ENCODE measurements at regions of chr1 and their contacts with region 1.

Region 1: GRCh38 chr1:239363930-239364329 is 22.4 kb upstream of the CHRM3 start:
- DNase-seq: no peak
- H3K4me3 ChIP-seq: no peak overlapping the region
- H3K4me3 Mint-ChIP-seq: no peak overlapping the region
- H3K27ac Mint-ChIP-seq: peak overlapping the region; percentile 40
- H3K4me1 ChIP-seq: peaks cover 20% of the 10 kb centered on the region
- H3K4me1 Mint-ChIP-seq: peaks cover 31% of the 10 kb centered on the region
- H3K27me3 ChIP-seq: no peaks in the 10 kb centered on the region
- H3K27me3 Mint-ChIP-seq: no peaks in the 10 kb centered on the region
- CTCF ChIP-seq: no peak

Region 2: GRCh38 chr1:239233626-239234025 is 130.3 kb before region 1 on chr1:
- CTCF ChIA-PET with region 1: no interaction called
- POLR2A ChIA-PET with region 1: no interaction called
- intact Hi-C with region 1: loop called (anchors 1 kb)
- DNase-seq: peak in 1 of 2 experiments; percentile 17
- H3K4me3 ChIP-seq: no peak overlapping the region
- H3K4me3 Mint-ChIP-seq: no peak overlapping the region
- H3K27ac Mint-ChIP-seq: no peak overlapping the region
- H3K4me1 ChIP-seq: peaks cover 17% of the 10 kb centered on the region
- H3K4me1 Mint-ChIP-seq: peaks cover 18% of the 10 kb centered on the region
- H3K27me3 ChIP-seq: no peaks in the 10 kb centered on the region
- H3K27me3 Mint-ChIP-seq: no peaks in the 10 kb centered on the region
- CTCF ChIP-seq: no peak

Region 3: DNA sequence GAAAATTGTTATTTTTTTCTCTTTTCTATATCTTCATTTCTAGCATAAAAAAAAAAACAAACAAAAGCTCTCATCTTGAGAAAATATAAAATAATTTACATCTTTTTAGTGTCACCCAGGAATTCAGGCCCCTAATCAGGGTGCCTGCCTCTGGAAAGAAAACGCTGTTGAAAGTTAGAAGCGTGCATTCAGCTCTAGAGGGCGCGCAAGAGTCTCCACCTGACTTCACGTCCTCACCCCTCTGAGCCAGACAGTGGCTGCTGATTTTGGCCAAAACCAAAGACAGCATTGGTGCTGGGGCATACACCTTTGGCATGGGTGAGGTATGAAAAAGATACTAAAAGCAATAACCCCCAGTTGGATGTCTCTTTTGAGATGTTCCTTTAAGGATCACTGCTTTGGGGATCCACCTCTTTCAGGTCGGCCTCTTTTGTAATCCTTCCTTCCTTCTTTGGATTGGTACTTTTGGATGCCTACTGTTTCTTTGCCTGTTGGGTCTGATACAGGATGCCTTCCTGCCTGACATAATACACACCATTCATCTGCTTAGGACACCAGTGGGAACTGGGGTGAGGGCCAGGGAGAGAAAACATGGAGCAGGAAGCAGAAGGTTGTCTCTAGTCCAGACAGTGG is 55.1 kb before region 1 on chr1:
- CTCF ChIA-PET with region 1: no interaction called
- POLR2A ChIA-PET with region 1: no interaction called
- intact Hi-C with region 1: loop called (anchors 2 kb)
- DNase-seq: peak in 1 of 2 experiments; percentile 43
- H3K4me3 ChIP-seq: no peak overlapping the region
- H3K4me3 Mint-ChIP-seq: no peak overlapping the region
- H3K27ac Mint-ChIP-seq: no peak overlapping the region
- H3K4me1 ChIP-seq: no peaks in the 10 kb centered on the region
- H3K4me1 Mint-ChIP-seq: no peaks in the 10 kb centered on the region
- H3K27me3 ChIP-seq: no peaks in the 10 kb centered on the region
- H3K27me3 Mint-ChIP-seq: no peaks in the 10 kb centered on the region
- CTCF ChIP-seq: peak; percentile 52 to 55

Region 4: GRCh38 chr1:239321877-239322276 is 42.1 kb before region 1 on chr1:
- CTCF ChIA-PET with region 1: no interaction called
- POLR2A ChIA-PET with region 1: no interaction called
- intact Hi-C with region 1: loop called (anchors 2 kb)
- DNase-seq: no peak
- H3K4me3 ChIP-seq: no peak overlapping the region
- H3K4me3 Mint-ChIP-seq: no peak overlapping the region
- H3K27ac Mint-ChIP-seq: no peak overlapping the region
- H3K4me1 ChIP-seq: no peaks in the 10 kb centered on the region
- H3K4me1 Mint-ChIP-seq: no peaks in the 10 kb centered on the region
- H3K27me3 ChIP-seq: no peaks in the 10 kb centered on the region
- H3K27me3 Mint-ChIP-seq: no peaks in the 10 kb centered on the region
- CTCF ChIP-seq: no peak

Region 5: DNA sequence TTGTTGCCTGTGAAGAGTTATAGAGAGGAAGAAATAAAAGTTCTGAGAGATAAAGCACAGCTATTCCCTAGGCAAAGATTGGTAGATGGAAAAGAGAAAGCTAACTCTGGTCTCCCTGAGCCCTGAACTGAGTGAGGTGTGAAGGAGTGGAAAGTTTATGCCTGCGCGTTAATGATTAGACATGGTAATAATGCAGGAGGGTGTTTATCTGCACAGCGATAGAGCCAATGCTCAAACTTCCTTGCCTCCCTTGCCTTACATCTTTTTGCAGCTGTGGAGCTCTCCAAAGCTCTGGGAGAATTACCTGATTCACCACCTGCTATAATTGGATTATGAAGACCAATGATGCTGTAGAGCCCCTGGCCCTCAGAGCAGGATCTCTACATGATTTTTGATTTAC is 10.4 kb before region 1 on chr1:
- CTCF ChIA-PET with region 1: interaction called, 7 read pairs
- POLR2A ChIA-PET with region 1: no interaction called
- intact Hi-C with region 1: loop called (anchors 1 kb)
- DNase-seq: peak in 1 of 2 experiments; percentile 40
- H3K4me3 ChIP-seq: no peak overlapping the region
- H3K4me3 Mint-ChIP-seq: no peak overlapping the region
- H3K27ac Mint-ChIP-seq: peak overlapping the region; percentile 67
- H3K4me1 ChIP-seq: 0 out of 2 replicates have a peak, but pooled peaks cover 6% of the 10 kb centered on the region
- H3K4me1 Mint-ChIP-seq: peaks cover 17% of the 10 kb centered on the region
- H3K27me3 ChIP-seq: no peaks in the 10 kb centered on the region
- H3K27me3 Mint-ChIP-seq: no peaks in the 10 kb centered on the region
- CTCF ChIP-seq: no peak

Region 6: GRCh38 chr1:239386453-239387303 is 22.7 kb after region 1 on chr1 and contains the start of gene CHRM3:
- CTCF ChIA-PET with region 1: interaction called, 5 read pairs
- POLR2A ChIA-PET with region 1: interaction called, 4 read pairs
- intact Hi-C with region 1: loop called (anchors 1 kb)
- DNase-seq: peak; percentile 77 to 78
- H3K4me3 ChIP-seq: peak within 1 kb of the TSS; percentile 45
- H3K4me3 Mint-ChIP-seq: peak within 1 kb of the TSS; percentile 79
- H3K27ac Mint-ChIP-seq: peak within 1 kb of the TSS; percentile 46
- H3K4me1 ChIP-seq: peaks cover 7% of the 10 kb centered on the region; the same call in 1 of the 2 replicates
- H3K4me1 Mint-ChIP-seq: peaks cover 9% of the 10 kb centered on the region
- H3K27me3 ChIP-seq: no peaks in the 10 kb centered on the region
- H3K27me3 Mint-ChIP-seq: peaks cover 12% of the 10 kb centered on the region
- CTCF ChIP-seq: peak in 1 of 2 experiments; percentile 27
- total RNA-seq, gene CHRM3: 6.8 and 8.6 TPM in 2 replicates